ENCODE measurements at regions of chrX and their contacts with region 1.

Region 1: GRCh38 chrX:118847676-118848075 is 24.1 kb downstream of the ZCCHC12 start:
- DNase-seq: no peak
- ATAC-seq: peak; percentile 48

Region 2: GRCh38 chrX:119004920-119005524 is 157.3 kb after region 1 on chrX:
- intact Hi-C with region 1: loop called (anchors 10 kb)
- DNase-seq: peak; percentile 61
- ATAC-seq: peak; percentile 68

Region 3: GRCh38 chrX:119067023-119067739 is 219.5 kb after region 1 on chrX:
- intact Hi-C with region 1: loop called (anchors 5 kb)
- DNase-seq: peak; percentile 61
- ATAC-seq: peak; percentile 75